ENCODE measurements at regions of chr10 and their contacts with region 1.

Region 1: DNA sequence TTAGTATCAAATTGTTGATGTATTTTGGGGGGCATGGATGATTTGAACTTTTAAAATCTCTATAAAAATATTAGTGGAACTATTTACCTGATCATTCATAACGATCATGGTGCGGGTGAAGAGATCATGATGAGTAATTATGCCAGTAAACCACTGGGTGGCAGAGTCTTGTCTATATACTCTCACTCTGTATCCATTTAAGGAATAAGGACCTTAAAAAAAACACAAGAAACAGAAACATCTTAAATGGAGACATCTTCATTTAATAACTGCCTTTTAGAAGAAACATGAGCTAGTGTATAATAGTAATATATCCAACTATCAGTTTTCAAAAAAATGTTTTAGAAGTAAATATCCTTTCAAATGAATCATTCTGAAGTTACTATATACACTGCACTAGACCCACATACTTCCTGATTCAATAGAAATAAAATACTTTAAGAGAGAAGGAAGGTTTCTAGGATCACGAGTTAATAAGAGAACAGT is 84.0 kb downstream of the NRBF2 start:
- DNase-seq: peak; percentile 32
- H3K4me3 Mint-ChIP-seq: no peak overlapping the region
- H3K27ac Mint-ChIP-seq: no peak overlapping the region
- H3K4me1 Mint-ChIP-seq: peaks cover 33% of the 10 kb centered on the region
- H3K27me3 Mint-ChIP-seq: no peaks in the 10 kb centered on the region

Region 2: DNA sequence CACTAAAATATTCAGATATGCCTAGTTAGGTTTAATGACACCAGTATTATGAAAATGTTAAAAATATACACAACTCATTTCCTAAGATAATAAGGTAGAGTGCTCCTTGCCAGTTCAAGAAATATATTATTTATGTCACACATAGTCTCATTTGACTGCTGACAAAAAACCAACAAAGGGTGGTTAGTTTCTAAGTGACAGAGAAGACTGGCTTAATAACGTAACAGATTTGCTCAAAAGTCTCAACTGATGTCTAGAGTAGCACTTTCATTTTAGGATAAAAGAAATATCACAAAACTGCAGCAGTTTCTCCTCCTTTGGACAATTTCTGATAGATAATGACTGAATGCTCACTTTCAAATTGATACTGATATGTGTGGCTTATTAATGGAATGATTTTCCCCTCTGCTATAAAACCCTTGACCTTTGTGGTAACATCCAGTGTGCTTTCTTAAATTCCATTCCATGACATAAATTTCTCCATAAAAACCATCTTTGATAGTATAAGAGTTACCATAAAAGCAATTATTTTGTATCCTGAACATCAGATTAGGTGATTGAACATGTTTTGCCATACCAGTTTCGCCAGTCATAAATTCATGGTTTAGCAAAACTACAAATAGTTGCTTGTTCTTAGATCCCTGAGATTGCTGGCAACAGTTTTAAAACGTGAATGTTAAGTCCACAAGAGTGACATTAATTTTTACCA is 10.2 kb after region 1 on chr10:
- CTCF ChIA-PET with region 1: interaction called, 10 read pairs
- DNase-seq: no peak
- H3K4me3 Mint-ChIP-seq: no peak overlapping the region
- H3K27ac Mint-ChIP-seq: peak overlapping the region; percentile 79
- H3K4me1 Mint-ChIP-seq: peaks cover 45% of the 10 kb centered on the region
- H3K27me3 Mint-ChIP-seq: no peaks in the 10 kb centered on the region

Region 3: GRCh38 chr10:63247771-63248170 is 30.6 kb after region 1 on chr10:
- CTCF ChIA-PET with region 1: no interaction called
- DNase-seq: no peak
- H3K4me3 Mint-ChIP-seq: no peak overlapping the region
- H3K27ac Mint-ChIP-seq: no peak overlapping the region
- H3K4me1 Mint-ChIP-seq: peaks cover 36% of the 10 kb centered on the region
- H3K27me3 Mint-ChIP-seq: no peaks in the 10 kb centered on the region